Dendritic cell treated with granulocyte-macrophage colony-stimulating factor and Interleukin-4, amounts not matched to agents 40 ng/mL and 50 ng/mL, for 4 days (primary cell): ENCODE measurements at regions of chr9 and their contacts with region 1.

Region 1: DNA sequence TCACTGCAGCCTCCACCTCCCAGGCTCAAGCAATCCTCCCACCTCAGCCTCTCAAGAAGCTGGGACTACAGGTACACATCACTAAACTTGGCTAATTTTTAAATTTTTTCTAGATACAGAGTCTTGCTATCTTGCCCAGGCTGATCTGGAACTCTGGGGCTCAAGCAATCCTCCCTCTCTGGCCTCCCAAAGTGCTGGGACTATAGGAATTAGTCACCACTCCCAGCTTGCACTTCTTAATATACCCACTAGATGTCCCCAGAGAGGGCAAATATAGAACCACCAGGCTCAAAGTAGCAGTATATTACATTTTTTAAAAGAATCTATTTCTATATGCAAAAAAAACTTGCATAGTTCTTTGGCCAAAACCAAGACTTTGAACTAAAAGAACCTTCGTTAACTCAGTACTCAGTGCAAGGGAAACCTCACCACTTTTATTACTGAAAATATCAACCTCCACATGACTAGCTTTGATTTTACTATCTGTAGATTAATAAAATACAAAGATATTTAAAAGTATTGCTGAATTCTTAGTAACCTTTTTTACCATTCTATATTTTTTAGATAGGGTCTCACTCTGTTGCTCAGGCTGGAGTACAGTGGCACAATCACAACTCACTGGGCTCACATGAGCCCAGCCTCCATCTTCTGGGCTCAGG is 25.8 kb upstream of the HSD17B3 start:
- H3K4me3 Mint-ChIP-seq: no peak overlapping the region
- H3K27ac Mint-ChIP-seq: no peak overlapping the region
- H3K4me1 Mint-ChIP-seq: no peaks in the 10 kb centered on the region
- H3K27me3 Mint-ChIP-seq: no peaks in the 10 kb centered on the region

Region 2: GRCh38 chr9:94783102-94783664 is 1544.6 kb before region 1 on chr9:
- intact Hi-C with region 1: no loop called
- H3K4me3 Mint-ChIP-seq: no peak overlapping the region
- H3K27ac Mint-ChIP-seq: no peak overlapping the region
- H3K4me1 Mint-ChIP-seq: no peaks in the 10 kb centered on the region
- H3K27me3 Mint-ChIP-seq: no peaks in the 10 kb centered on the region

Region 3: GRCh38 chr9:96478829-96479371 is 151.1 kb after region 1 on chr9:
- intact Hi-C with region 1: no loop called
- H3K4me3 Mint-ChIP-seq: no peak overlapping the region
- H3K27ac Mint-ChIP-seq: no peak overlapping the region
- H3K4me1 Mint-ChIP-seq: no peaks in the 10 kb centered on the region
- H3K27me3 Mint-ChIP-seq: no peaks in the 10 kb centered on the region

Region 4: DNA sequence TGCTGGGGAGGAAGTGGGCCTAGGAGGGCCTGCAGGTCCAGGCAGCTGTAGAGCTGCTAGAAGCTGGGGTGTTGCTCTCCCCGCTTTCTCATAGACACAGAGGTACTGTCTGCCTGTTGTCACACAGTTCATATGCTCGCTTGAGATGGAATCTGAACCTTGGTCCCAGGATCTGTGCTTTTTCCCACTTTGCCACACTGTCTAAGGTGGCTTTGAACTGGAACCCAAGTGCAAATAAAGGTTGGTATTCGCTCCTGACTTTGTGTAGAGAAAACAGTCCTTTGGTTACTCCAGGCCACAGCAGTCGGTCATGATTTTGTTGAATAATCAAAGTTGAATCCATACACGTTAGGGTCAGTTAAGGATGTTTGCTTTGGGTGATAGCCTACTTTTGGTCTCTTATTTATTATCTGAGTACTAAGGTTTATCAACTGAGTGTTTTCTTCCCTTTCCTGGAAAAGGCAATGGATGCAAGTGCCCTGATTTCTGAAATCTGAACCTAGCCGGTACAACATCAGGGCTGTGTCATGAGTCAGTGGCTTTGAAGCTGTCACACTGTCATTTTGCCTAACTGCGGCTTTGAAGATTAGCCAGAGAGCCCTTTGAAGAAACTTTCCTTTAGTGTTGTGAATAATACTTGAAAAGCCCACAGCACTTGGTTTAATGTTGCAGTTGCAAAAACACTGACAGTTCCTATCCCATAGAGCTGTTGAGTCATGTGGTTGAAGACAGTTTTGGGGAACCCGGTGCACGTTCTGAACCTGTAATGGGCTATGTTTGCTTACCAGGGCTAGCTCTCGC is 163.5 kb after region 1 on chr9:
- intact Hi-C with region 1: no loop called
- H3K4me3 Mint-ChIP-seq: no peak overlapping the region
- H3K27ac Mint-ChIP-seq: no peak overlapping the region
- H3K4me1 Mint-ChIP-seq: no peaks in the 10 kb centered on the region
- H3K27me3 Mint-ChIP-seq: no peaks in the 10 kb centered on the region

Region 5: GRCh38 chr9:96566498-96567207 is 238.8 kb after region 1 on chr9:
- intact Hi-C with region 1: loop called (anchors 5 kb)
- H3K4me3 Mint-ChIP-seq: peak overlapping the region; percentile 84
- H3K27ac Mint-ChIP-seq: peak overlapping the region; percentile 88
- H3K4me1 Mint-ChIP-seq: peaks cover 10% of the 10 kb centered on the region
- H3K27me3 Mint-ChIP-seq: peaks cover 41% of the 10 kb centered on the region